ENCODE measurements at regions of chr1 and their contacts with region 1.

Region 1: GRCh38 chr1:50929376-50929958 is 30.6 kb downstream of the FAF1 start:
- DNase-seq: no peak
- H3K4me3 ChIP-seq: no peak overlapping the region
- H3K27ac ChIP-seq: no peak overlapping the region
- H3K4me1 ChIP-seq: no peaks in the 10 kb centered on the region
- H3K27me3 ChIP-seq: no peaks in the 10 kb centered on the region
- CTCF ChIP-seq: peak in 2 of 3 experiments; percentile 17 to 39; a peak in 2 of 4 replicates
- EP300 ChIP-seq: no peak
- POLR2A ChIP-seq: no peak
- RAD21 ChIP-seq: peak in 1 of 2 experiments; percentile 32; a peak in 2 of 4 replicates

Region 2: GRCh38 chr1:50852889-50853288 is 76.6 kb before region 1 on chr1:
- CTCF ChIA-PET with region 1: no interaction called
- POLR2A ChIA-PET with region 1: no interaction called
- DNase-seq: no peak
- H3K4me3 ChIP-seq: no peak overlapping the region
- H3K27ac ChIP-seq: no peak overlapping the region
- H3K4me1 ChIP-seq: no peaks in the 10 kb centered on the region
- H3K27me3 ChIP-seq: no peaks in the 10 kb centered on the region
- CTCF ChIP-seq: no peak
- EP300 ChIP-seq: no peak
- POLR2A ChIP-seq: no peak
- RAD21 ChIP-seq: no peak

Region 3: DNA sequence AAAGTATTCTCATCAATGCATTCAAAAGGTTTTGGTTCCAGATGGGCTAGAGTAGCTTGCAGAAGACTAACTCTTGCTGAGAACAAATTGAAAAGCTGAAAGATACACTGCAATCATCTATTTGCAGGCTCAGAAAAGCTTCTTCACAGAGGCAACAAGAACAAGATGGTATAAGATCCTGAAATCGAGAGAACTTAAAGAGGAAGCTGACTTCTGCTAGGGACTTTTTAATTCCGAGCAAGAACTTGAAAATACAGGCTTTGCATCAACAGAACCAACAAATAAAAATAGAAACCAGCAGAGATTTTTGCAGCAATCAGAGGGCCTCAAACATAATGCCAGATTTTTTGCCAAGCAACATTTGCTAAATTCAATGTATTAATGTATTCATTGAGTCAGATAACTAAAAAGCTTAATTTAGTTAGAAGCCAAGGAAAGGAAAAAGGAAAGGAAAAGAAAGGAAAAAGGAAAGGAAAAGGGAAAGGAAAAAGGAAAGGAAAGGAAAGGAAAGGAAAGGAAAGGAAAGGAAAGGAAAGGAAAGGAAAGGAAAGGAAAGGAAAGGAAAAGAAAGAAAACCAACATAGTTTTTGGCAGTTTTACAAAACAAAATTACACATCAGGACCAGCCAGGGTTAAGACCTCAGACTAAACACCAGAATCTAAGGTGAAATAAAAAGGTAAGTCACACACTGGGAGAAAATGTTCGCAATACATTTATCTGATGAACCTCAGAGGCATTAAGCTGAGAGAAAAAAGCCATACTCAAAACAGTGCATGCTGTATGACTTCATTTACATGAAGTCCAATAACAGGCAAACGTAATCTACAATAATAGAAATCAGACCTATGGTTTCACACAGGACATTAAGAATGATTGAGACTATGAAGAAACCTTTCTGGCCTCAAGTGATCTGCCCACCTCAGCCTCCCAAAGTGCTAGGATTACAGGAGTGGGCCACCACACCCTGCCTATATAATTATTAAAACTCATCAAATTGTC is 12.0 kb before region 1 on chr1:
- CTCF ChIA-PET with region 1: interaction called, 21 read pairs
- POLR2A ChIA-PET with region 1: no interaction called
- DNase-seq: no peak
- H3K4me3 ChIP-seq: no peak overlapping the region
- H3K27ac ChIP-seq: no peak overlapping the region
- H3K4me1 ChIP-seq: no peaks in the 10 kb centered on the region
- H3K27me3 ChIP-seq: no peaks in the 10 kb centered on the region
- CTCF ChIP-seq: no peak
- EP300 ChIP-seq: no peak
- POLR2A ChIP-seq: no peak
- RAD21 ChIP-seq: no peak

Region 4: GRCh38 chr1:50950396-50950795 is 20.9 kb after region 1 on chr1:
- CTCF ChIA-PET with region 1: interaction called, 30 read pairs
- POLR2A ChIA-PET with region 1: no interaction called
- DNase-seq: no peak
- H3K4me3 ChIP-seq: no peak overlapping the region
- H3K27ac ChIP-seq: no peak overlapping the region
- H3K4me1 ChIP-seq: no peaks in the 10 kb centered on the region
- H3K27me3 ChIP-seq: peaks cover 0 to 1% (median 0%) of the 10 kb centered on the region in 4 experiments; a peak in 1 of 7 replicates
- CTCF ChIP-seq: no peak
- EP300 ChIP-seq: no peak
- POLR2A ChIP-seq: no peak
- RAD21 ChIP-seq: no peak

Region 5: DNA sequence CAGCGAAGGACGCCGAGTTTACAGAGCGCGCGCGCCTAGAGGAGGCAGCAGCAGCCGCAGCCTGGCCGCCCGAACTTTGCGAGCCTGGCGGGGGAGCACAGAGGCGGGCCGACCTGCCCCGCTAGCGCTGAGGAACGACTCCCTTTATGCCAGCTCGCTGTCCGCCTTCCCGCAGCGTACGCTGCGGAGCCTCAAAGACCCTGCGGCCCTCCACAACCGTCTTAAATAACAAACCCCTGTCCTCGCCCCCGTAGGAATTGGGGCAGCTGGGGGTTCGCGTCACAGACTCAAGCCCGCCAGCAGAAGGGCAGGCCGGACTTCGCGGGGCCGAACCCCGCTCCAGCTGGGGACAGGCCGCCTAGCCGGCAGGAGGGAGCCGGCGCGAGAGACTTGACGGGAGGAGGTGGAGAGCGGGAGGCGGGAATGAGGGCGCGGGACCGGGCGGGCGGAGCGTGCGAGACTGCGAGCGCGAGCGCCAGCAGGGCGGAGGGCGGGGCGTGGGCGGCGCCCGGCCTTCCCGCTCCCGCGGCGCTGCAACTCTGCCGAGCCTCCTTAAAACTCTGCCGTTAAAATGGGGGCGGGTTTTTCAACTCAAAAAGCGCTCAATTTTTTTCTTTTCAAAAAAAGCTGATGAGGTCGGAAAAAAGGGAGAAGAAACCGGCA is 38.8 kb after region 1 on chr1:
- CTCF ChIA-PET with region 1: interaction called, 18 read pairs
- POLR2A ChIA-PET with region 1: interaction called, 3 read pairs
- DNase-seq: peak in 1 of 2 experiments; percentile 87
- H3K4me3 ChIP-seq: peak overlapping the region; percentile 47 to 66 (median 53)
- H3K27ac ChIP-seq: no peak overlapping the region
- H3K4me1 ChIP-seq: peaks cover 6 to 12% (median 9%) of the 10 kb centered on the region in 4 experiments
- H3K27me3 ChIP-seq: peaks cover 37 to 72% (median 55%) of the 10 kb centered on the region in 4 experiments
- CTCF ChIP-seq: peak; percentile 25 to 45 (median 32); a peak in 3 of 4 replicates
- EP300 ChIP-seq: no peak
- POLR2A ChIP-seq: no peak
- RAD21 ChIP-seq: peak; percentile 31 to 44; a peak in 3 of 4 replicates

Region 6: DNA sequence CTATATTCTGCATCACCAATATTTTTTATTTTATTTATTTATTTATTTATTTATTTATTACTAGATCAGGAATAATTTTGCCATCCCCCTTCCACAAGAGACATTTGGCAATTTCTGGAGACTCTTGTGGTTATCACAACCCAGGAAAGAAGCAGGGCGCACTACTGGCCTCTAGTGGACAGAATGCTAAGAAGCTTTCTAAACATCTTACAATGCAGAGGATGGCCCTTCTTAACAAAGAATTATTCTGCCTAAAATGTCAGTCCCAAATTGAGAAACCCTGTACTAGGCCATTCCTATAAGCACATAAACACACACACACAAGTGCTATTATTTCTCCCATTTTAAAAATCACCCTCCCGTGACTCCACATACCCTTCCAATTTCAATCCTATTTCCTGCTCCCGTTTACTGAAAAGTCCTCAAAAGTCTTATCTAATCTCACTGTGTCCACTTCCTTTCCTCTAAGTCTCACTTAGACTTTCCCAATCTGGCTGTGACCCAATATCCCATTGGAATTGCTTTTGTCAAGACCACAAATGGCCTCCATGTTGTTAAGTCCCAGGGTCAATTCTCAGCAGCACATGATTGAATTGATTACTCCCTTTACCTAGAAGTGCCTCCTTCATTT is 262.9 kb after region 1 on chr1:
- CTCF ChIA-PET with region 1: interaction called, 24 read pairs
- POLR2A ChIA-PET with region 1: no interaction called
- DNase-seq: peak; percentile 9 to 76
- H3K4me3 ChIP-seq: no peak overlapping the region
- H3K27ac ChIP-seq: no peak overlapping the region
- H3K4me1 ChIP-seq: no peaks in the 10 kb centered on the region
- H3K27me3 ChIP-seq: no peaks in the 10 kb centered on the region
- CTCF ChIP-seq: peak in 2 of 3 experiments; percentile 70 to 77; a peak in 3 of 4 replicates
- EP300 ChIP-seq: no peak
- POLR2A ChIP-seq: no peak
- RAD21 ChIP-seq: peak; percentile 63 to 73